ENCODE measurements at regions of chr1 and their contacts with region 1.

Region 1: DNA sequence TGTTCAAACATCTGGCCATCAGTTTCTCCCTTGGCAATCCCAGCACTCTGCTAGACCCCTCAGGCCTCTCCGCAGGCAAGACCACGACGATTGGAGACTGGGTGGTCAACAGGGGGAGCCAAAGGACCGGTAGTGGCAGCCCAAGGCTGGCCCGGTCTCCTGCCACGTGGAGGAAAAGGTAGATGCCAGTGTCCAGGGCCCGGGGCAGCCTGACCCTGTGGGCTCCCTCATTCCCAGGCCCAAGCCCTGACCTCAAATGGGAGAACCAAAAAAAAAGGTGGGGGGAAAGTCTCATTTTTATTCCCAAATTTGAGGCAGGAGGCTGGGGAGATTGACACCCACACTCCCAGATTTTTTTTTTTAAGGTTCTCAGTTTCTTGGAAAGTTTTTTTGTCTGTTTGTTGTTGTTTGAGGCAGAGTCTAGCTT is 24.8 kb downstream of the S100A6 start:
- DNase-seq: peak; percentile 87
- H3K4me3 Mint-ChIP-seq: no peak overlapping the region
- H3K27ac Mint-ChIP-seq: peak overlapping the region; percentile 45
- H3K4me1 Mint-ChIP-seq: peaks cover 10% of the 10 kb centered on the region
- H3K27me3 Mint-ChIP-seq: no peaks in the 10 kb centered on the region

Region 2: DNA sequence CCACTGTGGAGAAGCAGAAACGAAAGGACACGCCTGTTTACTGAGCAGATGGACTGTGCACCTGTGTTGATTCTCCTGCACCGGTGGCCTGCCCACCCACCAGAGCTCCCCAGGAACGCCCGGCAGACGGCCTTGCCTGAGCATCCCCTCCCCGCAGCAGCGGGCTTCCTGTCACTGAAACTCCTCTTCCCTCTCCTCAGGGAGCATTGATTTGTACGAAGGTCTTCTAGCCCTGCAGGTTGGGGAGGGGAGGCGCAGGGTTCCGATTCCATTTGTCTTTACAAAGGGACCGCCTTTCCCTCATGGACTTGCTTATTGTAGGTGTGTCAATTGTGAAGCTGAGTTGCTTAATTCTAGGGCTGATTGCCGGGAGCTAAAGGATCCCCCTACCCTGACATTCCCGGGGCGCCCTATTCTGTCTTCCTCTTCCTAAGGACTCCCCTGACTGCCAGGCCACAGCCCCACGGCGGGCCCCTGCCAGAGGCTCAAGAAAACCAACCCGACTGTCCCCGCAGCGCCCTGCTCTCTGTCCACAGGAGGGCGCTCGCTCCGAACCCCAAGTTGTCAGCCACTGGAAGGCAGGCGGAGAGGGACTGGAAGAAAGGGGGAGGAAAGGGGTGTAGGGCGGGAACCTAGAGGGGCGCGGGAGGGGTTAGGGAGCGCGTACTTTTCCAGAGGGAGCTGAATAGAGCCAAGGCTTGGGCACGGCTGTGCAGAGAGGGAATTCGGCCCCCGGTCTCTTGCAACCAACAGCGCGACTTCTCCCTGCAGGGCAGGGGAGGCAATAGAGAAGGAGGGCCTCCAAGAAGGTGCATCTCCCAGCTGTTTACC is 22.0 kb after region 1 on chr1:
- CTCF ChIA-PET with region 1: interaction called, 65 read pairs
- POLR2A ChIA-PET with region 1: interaction called, 3 read pairs
- intact Hi-C with region 1: loop called (anchors 2 kb)
- DNase-seq: peak; percentile 90
- H3K4me3 Mint-ChIP-seq: peak overlapping the region; percentile 91
- H3K27ac Mint-ChIP-seq: peak overlapping the region; percentile 96
- H3K4me1 Mint-ChIP-seq: peaks cover 58% of the 10 kb centered on the region
- H3K27me3 Mint-ChIP-seq: no peaks in the 10 kb centered on the region

Region 3: GRCh38 chr1:153566440-153567379 is 55.7 kb after region 1 on chr1:
- CTCF ChIA-PET with region 1: interaction called, 153 read pairs
- POLR2A ChIA-PET with region 1: no interaction called
- intact Hi-C with region 1: loop called (anchors 1 kb)
- DNase-seq: peak; percentile 95
- H3K4me3 Mint-ChIP-seq: peak overlapping the region; percentile 64
- H3K27ac Mint-ChIP-seq: peak overlapping the region; percentile 97
- H3K4me1 Mint-ChIP-seq: peaks cover 53% of the 10 kb centered on the region
- H3K27me3 Mint-ChIP-seq: peaks cover 1% of the 10 kb centered on the region

Region 4: DNA sequence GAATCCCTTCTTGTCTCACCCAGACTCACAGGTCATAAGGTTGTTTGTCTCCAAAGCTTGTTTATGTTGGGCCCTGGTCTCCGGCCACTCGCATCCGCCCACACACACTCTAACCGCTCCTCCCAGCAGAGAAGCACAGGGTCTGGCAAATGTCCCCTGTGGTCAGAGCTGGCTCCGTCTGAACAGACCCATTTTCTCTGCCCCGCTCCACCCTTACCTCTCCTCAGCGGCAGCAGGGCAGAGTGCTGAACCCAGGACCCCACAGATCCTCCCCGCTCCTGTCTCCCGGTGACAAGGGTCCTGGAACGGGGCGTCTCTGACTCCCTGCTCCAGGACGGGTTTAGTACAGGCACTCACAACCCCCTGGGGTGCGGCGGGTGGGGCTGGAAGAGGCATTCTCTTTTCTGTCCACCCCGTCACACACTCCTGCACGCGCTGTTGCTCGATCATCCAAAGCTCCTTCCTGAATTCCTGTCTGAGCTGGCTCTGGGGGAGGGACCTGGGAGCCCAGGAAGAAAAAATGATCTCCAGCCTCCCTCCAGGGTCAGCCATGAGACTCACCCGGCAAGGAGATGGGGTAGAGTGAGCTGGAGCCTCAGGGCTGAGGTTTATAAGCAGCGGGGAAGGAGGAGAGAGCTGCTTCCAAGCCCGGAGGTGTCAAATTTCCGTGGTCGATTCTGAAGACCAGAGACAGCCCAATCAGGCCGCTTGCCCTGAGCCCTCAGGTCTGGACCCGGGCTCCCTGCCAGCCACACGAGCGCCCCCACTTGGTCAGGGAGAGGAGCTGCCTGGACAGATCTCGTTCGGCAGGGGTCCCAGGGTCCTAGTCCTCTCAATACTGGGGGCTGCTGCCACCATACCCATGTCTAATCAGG is 116.2 kb after region 1 on chr1 and contains the start of gene S100A13:
- CTCF ChIA-PET with region 1: interaction called, 10 read pairs
- POLR2A ChIA-PET with region 1: no interaction called
- intact Hi-C with region 1: no loop called
- DNase-seq: peak; percentile 38
- H3K4me3 Mint-ChIP-seq: no peak within 1 kb of the TSS
- H3K27ac Mint-ChIP-seq: no peak within 1 kb of the TSS
- H3K4me1 Mint-ChIP-seq: peaks cover 17% of the 10 kb centered on the region
- H3K27me3 Mint-ChIP-seq: peaks cover 7% of the 10 kb centered on the region
- total RNA-seq, gene S100A13: 11.6 to 13.6 TPM

Region 5: DNA sequence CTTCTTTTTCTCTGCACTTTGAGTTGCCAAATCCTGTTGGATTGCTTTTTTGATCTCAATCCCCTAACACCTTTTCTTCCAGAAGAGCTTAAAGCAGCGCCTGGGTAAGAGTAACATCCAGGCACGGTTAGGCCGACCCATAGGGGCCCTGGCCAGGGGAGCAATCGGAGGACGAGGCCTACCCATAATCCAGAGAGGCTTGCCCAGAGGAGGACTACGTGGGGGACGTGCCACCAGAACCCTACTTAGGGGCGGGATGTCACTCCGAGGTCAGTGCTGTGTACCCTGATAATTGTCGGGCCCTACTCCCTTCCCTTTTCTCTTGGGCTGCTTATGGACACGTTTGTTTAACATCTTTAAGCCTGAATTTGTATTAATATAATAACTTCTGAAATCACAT is 131.2 kb after region 1 on chr1:
- CTCF ChIA-PET with region 1: interaction called, 11 read pairs
- POLR2A ChIA-PET with region 1: no interaction called
- intact Hi-C with region 1: no loop called
- DNase-seq: no peak
- H3K4me3 Mint-ChIP-seq: no peak overlapping the region
- H3K27ac Mint-ChIP-seq: peak overlapping the region; percentile 29
- H3K4me1 Mint-ChIP-seq: peaks cover 40% of the 10 kb centered on the region
- H3K27me3 Mint-ChIP-seq: no peaks in the 10 kb centered on the region

Region 6: DNA sequence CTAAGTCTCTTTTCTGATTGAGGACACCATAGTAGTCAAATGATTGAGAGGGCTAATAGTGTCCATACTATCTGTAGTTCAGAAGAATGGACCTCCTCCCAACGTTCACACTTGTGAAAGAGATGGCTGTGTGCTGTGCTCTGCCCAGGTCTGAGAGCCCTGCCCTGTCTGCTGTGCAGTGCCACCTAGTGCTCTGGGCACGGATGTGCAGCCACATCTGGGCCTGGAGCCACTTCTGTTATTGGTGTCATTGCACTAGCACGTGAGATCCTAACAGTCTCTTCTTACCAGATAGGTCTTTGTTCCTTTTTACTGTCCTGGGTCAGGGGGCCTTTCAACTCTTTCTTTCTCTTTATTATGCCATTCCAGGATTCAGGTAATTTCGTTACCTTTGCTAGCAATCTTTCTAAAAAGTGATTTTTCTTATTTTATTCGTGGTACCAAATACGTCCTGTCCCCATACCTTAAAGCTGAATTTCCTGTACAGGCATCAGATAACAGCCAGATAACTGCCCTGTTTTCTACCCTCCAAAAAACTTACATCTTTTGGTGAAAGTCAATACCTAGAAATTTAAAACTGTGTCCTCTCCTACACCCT is 238.5 kb after region 1 on chr1:
- CTCF ChIA-PET with region 1: interaction called, 15 read pairs
- POLR2A ChIA-PET with region 1: no interaction called
- intact Hi-C with region 1: loop called (anchors 1 kb)
- DNase-seq: peak; percentile 88
- H3K4me3 Mint-ChIP-seq: no peak overlapping the region
- H3K27ac Mint-ChIP-seq: no peak overlapping the region
- H3K4me1 Mint-ChIP-seq: peaks cover 3% of the 10 kb centered on the region
- H3K27me3 Mint-ChIP-seq: no peaks in the 10 kb centered on the region

Region 7: GRCh38 chr1:153827168-153827964 is 316.4 kb after region 1 on chr1:
- CTCF ChIA-PET with region 1: no interaction called
- POLR2A ChIA-PET with region 1: no interaction called
- intact Hi-C with region 1: no loop called
- DNase-seq: no peak
- H3K4me3 Mint-ChIP-seq: no peak overlapping the region
- H3K27ac Mint-ChIP-seq: no peak overlapping the region
- H3K4me1 Mint-ChIP-seq: no peaks in the 10 kb centered on the region
- H3K27me3 Mint-ChIP-seq: no peaks in the 10 kb centered on the region

Measured in activated CD4-positive, alpha-beta memory T cell treated with anti-CD3 and anti-CD28 coated beads for 36 hours (primary cell).